Cardiac septum (tissue), 1 donor: ENCODE measurements at regions of chr1 and their contacts with region 1.

Region 1: GRCh38 chr1:147599362-147600118 is 58.2 kb downstream of the BCL9 start:
- DNase-seq: peak; percentile 99

Region 2: GRCh38 chr1:147316968-147317367 is 282.6 kb before region 1 on chr1:
- intact Hi-C with region 1: no loop called
- DNase-seq: no peak

Region 3: DNA sequence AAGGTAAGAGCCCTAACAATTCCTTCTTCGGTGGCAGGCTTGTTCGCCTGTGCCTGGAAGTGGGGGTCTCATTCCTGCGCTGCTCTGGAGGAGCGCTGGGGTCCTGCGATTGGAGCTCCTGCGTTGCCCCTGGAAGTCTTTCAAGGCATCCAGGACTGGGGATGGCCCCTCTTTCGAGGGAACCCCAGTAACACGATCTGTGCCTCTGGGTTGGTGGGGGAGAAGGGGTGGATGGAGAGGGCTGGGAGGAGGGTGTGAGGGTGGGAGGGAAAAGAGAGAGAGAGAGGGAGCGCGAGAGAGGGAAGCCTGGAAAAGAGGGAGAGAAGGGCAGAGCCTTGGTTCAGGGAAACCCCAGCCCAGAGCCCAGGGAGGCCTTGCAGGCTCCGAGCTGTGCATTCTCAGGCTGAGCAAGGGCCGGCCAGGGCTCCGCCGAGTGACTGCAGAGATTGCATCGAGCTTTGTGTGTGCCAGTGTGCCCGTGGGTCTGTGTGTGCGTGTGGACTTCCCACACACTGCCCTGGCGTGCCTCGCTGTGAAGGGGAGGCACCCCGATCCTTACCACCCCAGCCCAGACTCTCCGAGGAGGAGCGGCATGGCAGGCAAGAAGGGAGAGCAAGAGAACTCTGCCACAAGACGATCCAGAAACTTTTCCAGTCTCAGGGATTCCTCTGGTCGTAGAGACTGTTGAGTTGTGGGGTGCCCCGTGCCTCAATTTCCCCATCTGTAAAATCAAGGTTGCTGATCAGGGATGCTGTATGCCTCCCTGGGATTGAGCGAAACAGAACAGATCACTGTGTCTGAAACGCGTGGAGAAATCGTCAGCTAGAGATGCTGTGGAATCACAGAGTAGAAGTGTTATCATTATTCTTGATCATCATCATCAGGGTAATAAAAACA is 57.6 kb before region 1 on chr1:
- intact Hi-C with region 1: loop called (anchors 1 kb)
- DNase-seq: no peak

Region 4: DNA sequence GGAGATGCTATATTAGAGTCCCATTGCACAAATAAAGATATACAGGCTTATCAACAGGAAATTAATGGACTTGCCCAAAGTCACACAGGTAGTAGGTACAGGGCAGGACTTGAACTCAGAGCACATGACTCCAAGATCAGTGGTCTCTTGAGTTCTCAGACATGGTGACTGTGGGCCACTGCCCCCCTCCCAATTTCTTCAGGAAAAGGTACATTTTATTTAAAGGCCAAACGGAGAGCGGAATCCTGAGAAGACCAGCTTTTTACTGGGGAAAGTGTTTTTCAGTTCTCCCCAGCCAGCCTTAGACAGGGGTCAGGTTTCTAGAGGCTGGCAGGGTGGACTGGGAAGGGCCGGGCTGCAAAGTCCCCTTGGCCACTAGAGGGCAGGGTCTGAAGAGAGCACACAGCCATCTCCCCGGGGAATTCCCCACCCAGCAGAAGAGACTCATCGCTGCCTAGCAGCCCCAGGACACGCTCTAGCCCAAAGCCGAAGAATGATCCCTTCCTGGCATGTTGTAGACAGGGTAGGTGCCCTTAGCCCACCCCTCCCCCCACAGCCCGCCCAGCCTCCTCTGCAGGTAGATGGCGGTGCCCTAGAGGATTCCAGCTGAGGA is 41.1 kb after region 1 on chr1:
- intact Hi-C with region 1: loop called (anchors 5 kb)
- DNase-seq: peak; percentile 85

Region 5: GRCh38 chr1:147762233-147763024 is 162.9 kb after region 1 on chr1:
- intact Hi-C with region 1: no loop called
- DNase-seq: no peak